ENCODE measurements at regions of chr2 and their contacts with region 1.

Region 1: DNA sequence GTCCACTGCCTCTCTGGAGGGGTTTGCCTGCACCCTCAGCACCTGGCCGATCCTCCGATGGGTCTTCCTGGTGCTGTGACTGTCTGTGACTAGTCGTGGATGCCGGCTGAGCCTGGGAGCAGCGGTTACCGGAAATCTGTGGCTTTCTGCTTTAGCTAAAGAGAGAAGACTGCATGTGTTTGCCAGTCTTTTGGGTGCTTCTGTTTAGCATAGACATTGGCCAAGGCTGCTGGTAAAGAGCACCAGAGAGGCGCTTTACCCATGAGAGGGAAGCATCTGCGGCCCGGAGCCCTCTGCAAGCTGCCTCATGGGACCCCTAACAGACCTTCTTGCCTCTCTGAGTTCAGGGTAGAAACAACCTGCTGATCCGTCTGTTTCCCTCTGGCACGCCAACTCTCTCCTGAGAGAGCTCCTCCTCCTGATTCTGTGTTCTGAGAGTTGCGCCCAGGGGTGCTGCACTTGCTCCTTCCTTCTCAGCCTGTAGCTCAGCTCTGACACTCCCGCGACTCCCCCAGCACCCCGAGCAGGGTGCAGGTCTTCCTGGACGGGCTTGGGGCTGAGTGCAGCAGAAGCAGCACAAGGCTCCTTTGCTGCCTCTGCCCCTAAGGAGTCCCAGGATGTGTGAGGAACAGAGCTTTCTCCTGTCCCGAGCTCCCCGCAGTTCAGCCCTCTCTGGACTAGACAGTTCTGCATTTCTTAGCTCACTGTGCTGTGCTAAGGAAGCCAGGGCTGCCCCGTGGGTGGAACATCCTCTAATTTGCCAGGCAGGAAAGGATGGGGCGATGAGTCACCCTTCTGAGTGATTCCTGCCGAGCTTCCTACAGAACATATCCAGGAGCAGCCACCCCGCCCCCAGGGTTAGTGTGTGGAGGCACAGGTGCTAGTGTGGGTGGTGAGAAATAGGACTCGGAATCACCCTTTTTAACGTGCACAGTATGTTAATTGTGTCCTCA is 203.2 kb downstream of the SH3RF3 start:
- DNase-seq: peak; percentile 55
- H3K4me3 Mint-ChIP-seq: peak overlapping the region; percentile 69
- H3K27ac Mint-ChIP-seq: peak overlapping the region; percentile 91
- H3K4me1 Mint-ChIP-seq: peaks cover 47% of the 10 kb centered on the region
- H3K27me3 Mint-ChIP-seq: peaks cover 31% of the 10 kb centered on the region

Region 2: GRCh38 chr2:108813732-108814131 is 518.4 kb before region 1 on chr2:
- CTCF ChIA-PET with region 1: no interaction called
- DNase-seq: no peak
- H3K4me3 Mint-ChIP-seq: no peak overlapping the region
- H3K27ac Mint-ChIP-seq: peak overlapping the region; percentile 42
- H3K4me1 Mint-ChIP-seq: no peaks in the 10 kb centered on the region
- H3K27me3 Mint-ChIP-seq: no peaks in the 10 kb centered on the region

Region 3: DNA sequence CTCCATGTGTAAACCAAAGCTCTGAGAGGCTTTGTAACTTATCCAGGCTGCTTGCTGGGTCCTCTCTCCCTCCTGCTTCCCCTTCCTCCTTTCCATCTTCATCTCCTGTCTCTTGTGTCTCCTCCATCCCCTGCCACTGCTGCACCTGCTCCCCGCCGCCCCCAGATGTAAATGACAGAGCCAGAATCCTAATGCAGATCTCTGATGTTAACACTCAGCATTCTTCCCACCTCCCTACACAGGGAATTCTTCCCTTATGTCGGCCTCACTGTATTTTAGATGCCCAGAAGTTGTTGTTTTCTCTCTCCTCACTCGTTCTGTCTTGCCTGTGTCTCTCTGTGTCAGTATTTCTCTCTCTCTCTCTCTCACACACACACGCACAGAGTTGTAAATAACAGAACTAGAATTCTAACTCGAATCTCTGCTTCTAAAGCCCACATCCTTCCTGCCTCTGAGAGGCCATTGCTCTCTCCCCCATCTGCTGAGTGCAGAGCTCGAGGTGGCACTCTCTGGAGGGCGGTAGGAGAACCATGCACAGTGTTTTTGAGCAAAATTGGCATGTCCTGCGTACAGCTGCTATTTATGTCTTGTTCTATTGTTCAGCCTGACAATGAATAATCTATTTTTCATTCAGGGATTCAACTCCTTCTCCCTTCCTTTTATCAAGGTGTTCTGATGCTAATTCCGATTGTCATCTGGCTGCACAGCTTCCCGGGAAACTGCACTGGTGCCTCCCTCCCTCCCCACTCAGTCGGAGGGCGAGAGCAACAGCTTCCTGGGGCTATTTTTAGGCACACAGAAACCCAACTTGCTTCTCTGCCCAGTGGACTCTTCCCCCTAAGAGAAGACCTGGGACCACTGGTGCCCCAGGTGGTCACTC is 16.7 kb after region 1 on chr2:
- CTCF ChIA-PET with region 1: interaction called, 23 read pairs
- DNase-seq: peak; percentile 79
- H3K4me3 Mint-ChIP-seq: peak overlapping the region; percentile 21
- H3K27ac Mint-ChIP-seq: peak overlapping the region; percentile 86
- H3K4me1 Mint-ChIP-seq: peaks cover 43% of the 10 kb centered on the region
- H3K27me3 Mint-ChIP-seq: peaks cover 24% of the 10 kb centered on the region

Region 4: GRCh38 chr2:109516445-109517117 is 184.4 kb after region 1 on chr2:
- CTCF ChIA-PET with region 1: no interaction called
- DNase-seq: no peak
- H3K4me3 Mint-ChIP-seq: no peak overlapping the region
- H3K27ac Mint-ChIP-seq: no peak overlapping the region
- H3K4me1 Mint-ChIP-seq: no peaks in the 10 kb centered on the region
- H3K27me3 Mint-ChIP-seq: no peaks in the 10 kb centered on the region

Measured in activated naive CD4-positive, alpha-beta T cell treated with anti-CD3 and anti-CD28 coated beads, Interleukin-2, amount 10 ng/mL, durations not matched to agents 7 days and 5 days (primary cell).